ENCODE measurements at regions of chr7 and their contacts with region 1.

Region 1: DNA sequence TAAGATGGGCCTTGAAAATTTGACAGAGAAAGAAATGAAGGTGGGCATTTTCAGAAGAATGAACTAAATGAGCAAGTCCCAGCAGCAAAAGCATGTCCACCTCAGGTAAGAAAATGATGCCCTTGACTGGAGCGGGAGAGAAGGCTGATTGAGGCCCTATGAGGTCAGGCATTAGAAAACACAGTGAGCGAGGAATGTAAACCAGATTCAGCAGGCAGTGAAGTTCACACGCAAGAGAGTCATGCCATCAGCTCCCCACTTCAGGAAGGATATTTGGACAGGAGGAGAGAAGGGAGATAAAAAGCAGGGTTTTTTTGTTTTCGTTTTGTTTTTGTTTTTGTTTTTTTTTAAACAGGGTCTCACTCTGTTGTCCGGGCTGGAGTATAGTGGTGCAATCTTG is 166.4 kb downstream of the PPP1R17 start:
- DNase-seq: no peak

Region 2: DNA sequence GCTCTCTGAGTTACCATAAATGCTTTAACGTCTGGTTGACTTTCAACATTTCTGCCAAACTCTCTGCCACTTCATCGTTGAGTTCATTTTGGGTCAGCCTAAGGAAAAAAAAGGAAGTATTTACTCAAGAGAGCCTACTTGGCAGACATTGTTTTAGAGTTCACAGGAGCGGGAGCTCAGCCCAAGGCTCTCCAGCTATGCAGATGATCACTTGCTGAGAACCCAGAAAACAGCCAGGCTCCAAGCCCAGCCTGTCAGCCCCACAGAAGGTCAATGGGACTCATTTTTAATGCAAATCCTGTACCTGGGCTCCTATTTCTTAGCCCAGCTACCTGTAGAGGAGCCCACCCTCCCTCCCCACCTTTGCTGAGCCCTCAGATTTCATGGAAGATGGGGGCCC is 1420.3 kb before region 1 on chr7:
- intact Hi-C with region 1: no loop called
- DNase-seq: peak; percentile 88

Region 3: GRCh38 chr7:32115831-32116230 is 262.5 kb after region 1 on chr7:
- intact Hi-C with region 1: loop called in 1 of 2 experiments (anchors 2 kb)
- DNase-seq: no peak

Measured in posterior vena cava (tissue), 2 donors.